ENCODE measurements at regions of chr1 and their contacts with region 1.

Region 1: GRCh38 chr1:230022666-230023380 is 44.2 kb upstream of the GALNT2 start:
- DNase-seq: no peak
- H3K4me3 ChIP-seq: no peak overlapping the region
- H3K27ac ChIP-seq: no peak overlapping the region
- H3K4me1 ChIP-seq: no peaks in the 10 kb centered on the region
- H3K27me3 ChIP-seq: no peaks in the 10 kb centered on the region
- CTCF ChIP-seq: no peak
- POLR2A ChIP-seq: no peak

Region 2: DNA sequence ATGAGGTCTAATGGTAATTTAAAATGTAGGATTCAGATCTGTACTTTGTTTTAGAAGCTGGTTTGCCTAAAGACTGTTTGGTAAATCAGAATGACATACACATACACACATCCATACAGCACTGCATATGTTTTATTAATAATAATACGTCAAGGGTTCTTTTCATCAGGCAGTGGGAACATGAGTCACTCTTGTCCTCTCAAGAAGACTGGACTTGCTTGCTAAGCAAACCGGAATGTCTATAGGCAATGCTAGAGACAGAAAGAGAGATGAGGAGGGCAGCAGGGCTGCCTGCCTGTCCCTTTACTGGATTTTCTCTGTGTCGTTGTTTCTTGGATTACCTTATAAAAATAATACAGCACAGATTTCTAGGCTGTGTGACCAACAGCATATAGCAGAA is 74.9 kb before region 1 on chr1:
- intact Hi-C with region 1: loop called (anchors 2 kb)
- DNase-seq: no peak
- H3K4me3 ChIP-seq: no peak overlapping the region
- H3K27ac ChIP-seq: no peak overlapping the region
- H3K4me1 ChIP-seq: no peaks in the 10 kb centered on the region
- H3K27me3 ChIP-seq: peaks cover 0 to 4% of the 10 kb centered on the region in 2 donors
- CTCF ChIP-seq: no peak
- POLR2A ChIP-seq: no peak

Region 3: GRCh38 chr1:230002164-230002803 is 20.5 kb before region 1 on chr1:
- intact Hi-C with region 1: loop called (anchors 2 kb)
- DNase-seq: no peak
- H3K4me3 ChIP-seq: peak overlapping the region in 1 of 3 donors; percentile 1
- H3K27ac ChIP-seq: no peak overlapping the region
- H3K4me1 ChIP-seq: no peaks in the 10 kb centered on the region
- H3K27me3 ChIP-seq: no peaks in the 10 kb centered on the region
- CTCF ChIP-seq: no peak
- POLR2A ChIP-seq: no peak